ENCODE measurements at regions of chr5 and their contacts with region 1.

Region 1: DNA sequence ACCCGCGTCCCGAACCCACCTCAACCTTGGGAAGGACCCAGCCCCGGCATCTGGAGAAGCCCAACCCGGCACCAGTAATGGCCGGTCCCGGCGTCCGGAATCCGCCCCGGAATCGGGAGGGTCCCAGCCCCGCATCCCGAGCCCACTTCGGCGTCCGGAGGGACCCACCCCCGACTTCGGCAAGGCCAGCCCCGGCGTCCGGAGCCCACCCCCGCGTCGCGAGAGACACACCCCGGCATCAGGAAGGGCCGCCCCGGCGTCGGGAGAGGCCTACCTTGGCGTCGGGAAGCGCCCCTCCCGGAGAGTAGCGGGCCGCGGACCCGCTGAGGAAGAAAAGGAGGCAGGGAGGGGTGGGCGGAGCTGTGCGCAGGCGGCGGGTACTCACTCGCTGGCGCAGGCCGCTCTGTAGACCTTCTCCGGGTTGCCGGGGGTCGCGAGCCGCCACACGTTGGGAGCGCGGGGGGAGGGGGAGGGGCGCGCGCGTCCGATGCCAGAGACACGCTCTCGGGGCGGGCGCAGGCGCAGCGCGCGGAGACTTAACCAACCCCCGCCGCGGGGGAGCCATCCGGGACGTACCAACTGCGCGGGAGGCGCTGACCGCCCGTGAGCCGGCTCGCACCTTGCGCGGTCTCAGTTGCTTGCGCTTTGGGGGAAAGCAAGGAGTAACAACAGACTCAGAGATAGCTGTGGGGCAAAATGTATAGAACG is at the start of gene UIMC1:
- DNase-seq: peak; percentile 90
- H3K4me3 Mint-ChIP-seq: peak within 1 kb of the TSS; percentile 94
- H3K27ac Mint-ChIP-seq: peak within 1 kb of the TSS; percentile 96
- H3K4me1 Mint-ChIP-seq: peaks cover 27% of the 10 kb centered on the region
- H3K27me3 Mint-ChIP-seq: no peaks in the 10 kb centered on the region
- total RNA-seq, gene UIMC1: 49.3 to 53.0 TPM

Region 2: GRCh38 chr5:176916337-176916736 is 90.1 kb before region 1 on chr5:
- CTCF ChIA-PET with region 1: no interaction called
- POLR2A ChIA-PET with region 1: no interaction called
- DNase-seq: no peak
- H3K4me3 Mint-ChIP-seq: no peak overlapping the region
- H3K27ac Mint-ChIP-seq: no peak overlapping the region
- H3K4me1 Mint-ChIP-seq: peaks cover 10% of the 10 kb centered on the region
- H3K27me3 Mint-ChIP-seq: no peaks in the 10 kb centered on the region

Region 3: GRCh38 chr5:176929654-176930053 is 76.8 kb before region 1 on chr5:
- CTCF ChIA-PET with region 1: no interaction called
- POLR2A ChIA-PET with region 1: no interaction called
- DNase-seq: no peak
- H3K4me3 Mint-ChIP-seq: no peak overlapping the region
- H3K27ac Mint-ChIP-seq: peak overlapping the region; percentile 31
- H3K4me1 Mint-ChIP-seq: peaks cover 9% of the 10 kb centered on the region
- H3K27me3 Mint-ChIP-seq: no peaks in the 10 kb centered on the region

Region 4: DNA sequence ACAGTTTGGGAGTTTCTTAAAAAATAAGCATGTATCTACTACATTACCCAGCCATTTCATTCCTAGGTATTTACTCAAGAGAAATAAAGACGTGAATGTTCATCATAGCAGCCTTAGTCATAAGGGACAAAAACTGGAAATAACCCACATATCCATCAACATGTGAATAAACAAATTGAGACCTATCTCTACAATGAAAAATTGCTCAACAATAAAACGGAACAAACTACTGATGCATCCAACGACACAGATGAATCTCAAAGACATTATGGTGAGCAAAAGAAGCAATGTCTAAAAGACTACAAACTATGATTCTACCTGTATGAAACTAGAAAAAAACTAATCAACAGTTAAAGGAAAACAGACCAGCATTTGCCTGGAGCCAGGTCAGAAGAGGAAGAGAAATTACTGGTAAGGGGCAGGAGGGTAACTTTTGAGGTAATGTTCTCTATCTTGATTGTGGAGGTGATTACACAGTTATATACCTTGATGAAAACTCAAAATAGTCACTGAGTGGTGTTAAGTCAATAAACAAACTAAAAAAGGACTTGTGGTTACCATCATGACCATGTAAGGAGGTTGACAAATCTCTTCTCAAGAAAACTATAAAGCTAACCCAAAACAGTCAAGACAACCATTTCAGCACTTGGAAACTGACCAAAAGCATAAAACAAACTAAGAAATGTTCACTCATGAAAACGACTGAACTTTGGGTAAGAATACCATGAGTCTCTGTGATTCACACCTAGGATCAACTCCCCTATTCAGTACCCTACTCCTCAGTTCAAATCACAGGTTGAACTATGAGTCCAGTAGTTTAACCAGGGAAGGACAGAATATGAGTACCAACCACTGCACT is 10.3 kb before region 1 on chr5:
- CTCF ChIA-PET with region 1: interaction called, 11 read pairs
- POLR2A ChIA-PET with region 1: no interaction called
- DNase-seq: no peak
- H3K4me3 Mint-ChIP-seq: no peak overlapping the region
- H3K27ac Mint-ChIP-seq: no peak overlapping the region
- H3K4me1 Mint-ChIP-seq: peaks cover 38% of the 10 kb centered on the region
- H3K27me3 Mint-ChIP-seq: no peaks in the 10 kb centered on the region

Region 5: GRCh38 chr5:177022384-177023308 is 16.2 kb after region 1 on chr5 and contains the start of gene ZNF346:
- CTCF ChIA-PET with region 1: interaction called, 11 read pairs
- POLR2A ChIA-PET with region 1: interaction called, 3 read pairs
- DNase-seq: peak; percentile 96
- H3K4me3 Mint-ChIP-seq: peak within 1 kb of the TSS; percentile 92
- H3K27ac Mint-ChIP-seq: peak within 1 kb of the TSS; percentile 93
- H3K4me1 Mint-ChIP-seq: peaks cover 39% of the 10 kb centered on the region
- H3K27me3 Mint-ChIP-seq: no peaks in the 10 kb centered on the region
- total RNA-seq, gene ZNF346: 27.6 to 28.0 TPM

Measured in activated CD4-positive, alpha-beta T cell treated with anti-CD3 and anti-CD28 coated beads, Interleukin-2, amount 10 ng/mL, durations not matched to agents 7 days and 5 days (primary cell).